ENCODE measurements at regions of chr10 and their contacts with region 1.

Region 1: DNA sequence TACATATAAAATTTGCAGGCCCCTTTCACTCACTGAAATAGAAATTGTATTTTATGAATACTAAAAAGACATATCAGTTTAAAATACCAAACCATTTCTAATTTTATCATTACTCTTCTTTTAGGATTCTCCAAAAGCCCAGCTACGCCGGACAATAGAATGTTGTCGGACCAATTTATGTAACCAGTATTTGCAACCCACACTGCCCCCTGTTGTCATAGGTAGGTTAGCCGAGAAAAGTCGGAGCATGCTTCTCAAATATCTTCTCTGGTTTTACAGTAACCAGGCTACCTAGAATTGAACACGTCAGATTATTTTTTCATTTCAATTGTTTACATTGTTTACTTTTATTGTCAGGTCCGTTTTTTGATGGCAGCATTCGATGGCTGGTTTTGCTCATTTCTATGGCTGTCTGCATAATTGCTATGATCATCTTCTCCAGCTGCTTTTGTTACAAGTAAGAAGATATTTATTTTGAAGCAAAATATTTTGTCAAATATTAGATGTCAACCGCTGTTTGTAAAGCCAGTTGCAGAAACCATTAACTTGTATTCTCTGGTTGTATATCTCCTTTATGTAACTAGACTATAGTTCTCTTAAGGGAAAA is 57.6 kb downstream of the MMRN2 start:
- DNase-seq: no peak
- H3K4me3 ChIP-seq: no peak overlapping the region
- H3K27me3 ChIP-seq: no peaks in the 10 kb centered on the region
- CTCF ChIP-seq: peak; percentile 74

Region 2: DNA sequence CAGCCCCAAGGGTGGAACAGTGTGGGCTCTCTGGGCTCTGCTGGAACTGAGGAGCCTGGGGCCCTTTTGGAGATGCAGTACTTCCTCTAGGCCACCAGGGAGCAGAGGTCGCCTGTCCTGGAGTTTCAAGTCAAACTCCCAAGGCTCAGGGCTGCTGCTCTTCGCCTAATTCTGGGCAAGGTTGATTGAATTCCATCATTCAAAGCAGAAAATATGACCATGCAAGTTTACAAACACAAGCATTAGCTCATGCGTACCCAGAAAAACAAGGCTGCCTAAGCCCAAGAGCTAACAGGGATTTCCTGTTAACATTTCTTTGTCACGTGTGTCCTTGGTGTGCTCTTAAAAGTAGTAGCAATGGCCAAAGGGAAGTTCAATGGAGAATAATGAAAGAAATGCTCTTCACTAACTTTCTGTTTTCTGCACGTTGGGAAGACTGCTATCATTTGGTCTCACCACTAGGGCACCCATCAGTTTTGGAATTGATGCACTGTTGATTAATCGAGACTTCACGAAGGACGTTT is 211.3 kb before region 1 on chr10:
- CTCF ChIA-PET with region 1: interaction called, 54 read pairs
- POLR2A ChIA-PET with region 1: no interaction called
- DNase-seq: no peak
- H3K4me3 ChIP-seq: no peak overlapping the region
- H3K27me3 ChIP-seq: no peaks in the 10 kb centered on the region
- CTCF ChIP-seq: peak; percentile 87

Region 3: GRCh38 chr10:86693721-86694369 is 205.9 kb before region 1 on chr10:
- CTCF ChIA-PET with region 1: interaction called, 54 read pairs
- POLR2A ChIA-PET with region 1: no interaction called
- DNase-seq: peak; percentile 29
- H3K4me3 ChIP-seq: no peak overlapping the region
- H3K27me3 ChIP-seq: peaks cover 1% of the 10 kb centered on the region; the same call in 1 of the 2 replicates
- CTCF ChIP-seq: peak; percentile 83

Region 4: DNA sequence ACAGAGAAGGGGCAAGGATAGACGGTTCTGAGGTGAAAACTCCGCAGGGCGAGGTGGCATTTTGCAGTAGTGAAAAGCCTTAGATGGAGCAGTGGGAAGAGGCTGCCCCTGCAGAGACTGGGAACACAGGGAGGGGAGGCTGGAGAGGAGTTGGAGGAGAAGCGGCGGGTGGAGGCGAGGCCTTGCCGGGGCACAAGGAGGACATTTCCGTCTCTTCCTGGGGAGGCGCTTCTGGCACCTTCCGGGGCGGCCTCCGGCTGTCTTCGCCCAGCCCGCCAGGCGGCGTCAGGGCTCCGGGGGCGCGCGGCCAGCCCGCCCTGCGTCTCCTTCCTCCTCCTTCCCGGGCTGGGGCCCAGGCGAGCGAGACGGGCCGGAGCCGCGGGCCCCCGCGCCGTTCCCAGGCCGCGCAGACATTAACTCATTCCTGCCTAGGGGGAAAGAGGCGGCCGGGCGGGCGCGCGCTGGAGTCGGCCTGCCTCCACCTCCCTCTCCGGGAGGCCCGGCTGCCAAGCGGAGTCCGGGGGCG is 188.7 kb before region 1 on chr10:
- CTCF ChIA-PET with region 1: interaction called, 22 read pairs
- POLR2A ChIA-PET with region 1: no interaction called
- DNase-seq: peak; percentile 42
- H3K4me3 ChIP-seq: peak overlapping the region; percentile 57
- H3K27me3 ChIP-seq: no peaks in the 10 kb centered on the region
- CTCF ChIP-seq: peak; percentile 66

Region 5: DNA sequence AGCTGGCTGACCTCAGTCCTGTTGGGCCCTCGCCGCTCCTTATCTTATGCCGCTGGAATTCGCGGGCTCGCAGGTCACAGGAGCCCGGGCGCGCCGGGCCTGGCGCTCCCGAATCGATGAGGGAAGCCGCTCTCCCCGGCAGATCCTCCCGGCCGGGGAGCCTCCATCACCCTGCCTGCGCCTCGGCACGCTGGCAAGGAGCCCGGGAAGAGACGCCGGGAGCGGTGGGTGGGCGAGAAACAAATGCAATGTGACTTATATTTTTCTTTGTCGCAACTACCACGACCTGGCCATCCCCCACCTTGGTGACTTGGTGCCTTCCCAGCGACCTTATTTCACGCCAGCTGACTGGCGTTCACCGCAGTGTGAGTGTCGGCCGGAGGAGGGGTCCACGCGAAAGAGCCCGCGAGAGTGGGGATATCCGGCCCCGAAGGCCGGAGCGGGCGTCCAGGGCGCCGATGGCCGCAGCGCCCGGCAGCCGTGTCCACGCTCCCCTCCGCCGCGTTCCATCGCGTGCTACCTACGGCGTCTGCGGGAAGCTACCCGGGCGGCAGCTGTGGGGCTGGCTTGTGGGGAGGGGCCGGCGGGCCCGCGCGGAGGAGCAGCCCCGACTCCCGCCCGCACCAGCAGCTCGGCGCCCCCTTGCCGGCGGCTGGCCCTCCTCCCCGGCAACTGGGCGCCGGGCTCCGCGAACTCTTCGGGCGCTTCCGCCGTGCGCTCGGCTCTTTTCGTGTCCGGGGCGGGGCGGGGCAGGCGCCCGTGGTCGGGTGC is 143.8 kb before region 1 on chr10:
- CTCF ChIA-PET with region 1: interaction called, 18 read pairs
- POLR2A ChIA-PET with region 1: no interaction called
- DNase-seq: no peak
- H3K4me3 ChIP-seq: peak overlapping the region; percentile 77
- H3K27me3 ChIP-seq: no peaks in the 10 kb centered on the region
- CTCF ChIP-seq: no peak

Region 6: GRCh38 chr10:87094373-87095235 is 194.8 kb after region 1 on chr10 and contains the starts of genes GLUD1 and SHLD2:
- CTCF ChIA-PET with region 1: no interaction called
- POLR2A ChIA-PET with region 1: no interaction called
- DNase-seq: peak; percentile 50
- H3K4me3 ChIP-seq: peak within 1 kb of the TSS; percentile 72
- H3K27me3 ChIP-seq: no peaks in the 10 kb centered on the region
- CTCF ChIP-seq: no peak
- polyA plus RNA-seq, gene GLUD1: 78.6 and 99.5 TPM in 2 replicates
- polyA plus RNA-seq, gene SHLD2: 7.7 and 15.9 TPM in 2 replicates